HepG2 (cell line): ENCODE measurements at regions of chr2 and their contacts with region 1.

Region 1: DNA sequence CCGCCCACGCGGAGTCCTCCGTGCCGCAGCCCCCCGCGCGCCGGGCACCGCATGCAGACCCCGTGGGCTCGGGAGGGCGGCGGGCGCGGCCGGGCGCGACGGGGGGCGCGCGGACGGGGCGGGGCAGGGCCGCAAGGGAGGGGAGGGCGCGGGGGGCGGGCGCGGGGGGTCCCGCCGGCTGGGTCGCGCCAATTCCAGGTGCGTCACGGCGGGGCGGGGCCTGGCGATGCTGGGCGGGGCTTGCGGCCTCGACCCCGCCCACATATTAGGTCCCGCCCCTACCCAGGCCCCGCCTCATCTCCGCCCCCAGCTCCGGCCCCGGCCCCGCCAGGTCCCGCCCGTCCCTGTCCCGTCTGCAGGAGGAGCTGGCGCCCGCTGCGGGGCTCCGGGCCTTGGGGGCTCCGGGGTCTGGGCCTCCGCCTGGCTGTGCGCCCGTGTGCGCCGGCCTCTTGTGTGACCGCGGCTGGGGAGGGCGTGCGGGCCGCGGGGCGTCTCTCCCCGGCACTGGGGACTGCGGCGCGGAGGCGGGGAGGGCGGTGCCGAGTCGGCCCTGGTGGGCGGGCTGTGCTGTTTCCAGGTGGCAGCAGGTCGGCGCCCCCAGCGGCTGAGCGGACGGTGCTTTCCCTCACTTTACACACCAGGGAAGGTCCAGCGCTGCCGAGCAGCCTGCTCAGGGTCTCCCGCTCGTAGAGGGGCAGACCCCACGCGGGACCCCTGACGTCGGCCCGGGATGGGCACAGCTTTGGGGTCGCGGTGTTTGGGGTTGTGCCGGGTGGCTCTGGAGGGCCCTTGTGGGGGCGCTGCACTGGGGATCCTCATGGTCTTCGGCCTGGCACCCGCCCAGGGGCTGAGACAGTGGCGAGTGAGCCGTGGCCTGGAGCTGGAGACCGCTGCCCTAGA is 543 bp downstream of the ING5 start:
- DNase-seq: peak; percentile 85
- ATAC-seq: peak; percentile 86
- H3K4me3 ChIP-seq: peak overlapping the region; percentile 81 to 99 (median 94)
- H3K27ac ChIP-seq: peak overlapping the region; percentile 98
- H3K4me1 ChIP-seq: peaks cover 28% of the 10 kb centered on the region
- H3K27me3 ChIP-seq: no peaks in the 10 kb centered on the region
- CTCF ChIP-seq: peak; percentile 86
- EP300 ChIP-seq: no peak
- POLR2A ChIP-seq: peak; percentile 38 to 45; a peak in 2 of 4 replicates
- RAD21 ChIP-seq: peak; percentile 81

Region 2: GRCh38 chr2:241391892-241392665 is 310.3 kb before region 1 on chr2:
- CTCF ChIA-PET with region 1: no interaction called
- POLR2A ChIA-PET with region 1: no interaction called
- in situ Hi-C with region 1: no loop called
- intact Hi-C with region 1: no loop called
- DNase-seq: peak; percentile 73
- ATAC-seq: peak; percentile 99
- H3K4me3 ChIP-seq: no peak overlapping the region
- H3K27ac ChIP-seq: no peak overlapping the region
- H3K4me1 ChIP-seq: no peaks in the 10 kb centered on the region
- H3K27me3 ChIP-seq: no peaks in the 10 kb centered on the region
- CTCF ChIP-seq: peak; percentile 69
- EP300 ChIP-seq: no peak
- POLR2A ChIP-seq: no peak
- RAD21 ChIP-seq: peak; percentile 64

Region 3: DNA sequence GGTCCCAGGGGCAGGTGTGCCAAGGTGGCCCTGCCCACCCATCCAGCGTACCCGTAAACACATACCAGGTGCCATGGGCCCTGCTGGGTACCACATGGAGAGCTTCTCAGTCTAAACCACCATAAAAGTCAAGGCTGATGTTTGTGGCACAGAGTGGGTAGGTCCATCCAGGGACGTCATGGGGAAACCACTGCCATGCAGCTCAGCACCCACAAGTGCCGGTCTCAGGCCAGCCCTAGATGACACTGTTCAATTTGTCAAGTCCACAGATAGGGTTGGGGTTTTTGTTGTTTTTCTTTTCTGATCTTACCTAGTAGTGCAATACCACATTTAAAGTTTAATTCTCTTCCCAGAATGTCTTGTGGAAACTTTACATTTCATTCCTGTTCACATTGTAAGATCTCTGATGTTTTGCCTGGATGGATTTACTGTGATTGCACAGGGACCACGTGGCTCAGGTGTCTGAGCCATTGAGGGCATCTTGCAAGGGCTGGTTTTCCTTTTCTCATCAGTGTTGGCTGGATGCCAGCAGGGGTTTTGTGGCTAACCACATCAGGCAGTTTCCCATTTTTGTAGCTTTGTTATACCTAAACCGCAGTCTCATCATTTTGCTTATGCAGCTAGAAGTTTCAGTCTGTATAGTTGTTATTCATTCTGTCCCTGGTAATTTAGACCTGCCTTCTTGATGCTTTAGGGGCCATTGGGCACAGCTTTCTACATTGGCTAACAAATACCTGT is 258.7 kb before region 1 on chr2:
- CTCF ChIA-PET with region 1: no interaction called
- POLR2A ChIA-PET with region 1: no interaction called
- in situ Hi-C with region 1: no loop called
- intact Hi-C with region 1: no loop called
- DNase-seq: no peak
- ATAC-seq: no peak
- H3K4me3 ChIP-seq: no peak overlapping the region
- H3K27ac ChIP-seq: no peak overlapping the region
- H3K4me1 ChIP-seq: no peaks in the 10 kb centered on the region
- H3K27me3 ChIP-seq: no peaks in the 10 kb centered on the region
- CTCF ChIP-seq: no peak
- EP300 ChIP-seq: no peak
- POLR2A ChIP-seq: no peak
- RAD21 ChIP-seq: no peak

Region 4: GRCh38 chr2:241724259-241724974 is 22.0 kb after region 1 on chr2:
- CTCF ChIA-PET with region 1: no interaction called
- POLR2A ChIA-PET with region 1: interaction called, 11 read pairs
- in situ Hi-C with region 1: no loop called
- intact Hi-C with region 1: no loop called
- DNase-seq: no peak
- ATAC-seq: peak; percentile 61
- H3K4me3 ChIP-seq: no peak overlapping the region
- H3K27ac ChIP-seq: no peak overlapping the region
- H3K4me1 ChIP-seq: no peaks in the 10 kb centered on the region
- H3K27me3 ChIP-seq: no peaks in the 10 kb centered on the region
- CTCF ChIP-seq: peak; percentile 89
- EP300 ChIP-seq: no peak
- POLR2A ChIP-seq: no peak
- RAD21 ChIP-seq: peak; percentile 74

Region 5: GRCh38 chr2:241734467-241735208 is 32.3 kb after region 1 on chr2 and contains the start of gene D2HGDH:
- CTCF ChIA-PET with region 1: no interaction called
- POLR2A ChIA-PET with region 1: interaction called, 77 read pairs
- in situ Hi-C with region 1: no loop called
- intact Hi-C with region 1: no loop called
- DNase-seq: peak; percentile 80
- ATAC-seq: peak; percentile 81
- H3K4me3 ChIP-seq: peak within 1 kb of the TSS; percentile 80 to 100 (median 96)
- H3K27ac ChIP-seq: peak within 1 kb of the TSS; percentile 91
- H3K4me1 ChIP-seq: peaks cover 28% of the 10 kb centered on the region
- H3K27me3 ChIP-seq: no peaks in the 10 kb centered on the region; a peak in 2 of 5 replicates
- CTCF ChIP-seq: no peak
- EP300 ChIP-seq: peak in 1 of 2 experiments; percentile 4; a peak in 1 of 4 replicates
- POLR2A ChIP-seq: peak in 1 of 2 experiments; percentile 75; a peak in 1 of 4 replicates
- RAD21 ChIP-seq: peak; percentile 64
- total RNA-seq, gene D2HGDH: 10.2 and 20.3 TPM in 2 replicates

Region 6: DNA sequence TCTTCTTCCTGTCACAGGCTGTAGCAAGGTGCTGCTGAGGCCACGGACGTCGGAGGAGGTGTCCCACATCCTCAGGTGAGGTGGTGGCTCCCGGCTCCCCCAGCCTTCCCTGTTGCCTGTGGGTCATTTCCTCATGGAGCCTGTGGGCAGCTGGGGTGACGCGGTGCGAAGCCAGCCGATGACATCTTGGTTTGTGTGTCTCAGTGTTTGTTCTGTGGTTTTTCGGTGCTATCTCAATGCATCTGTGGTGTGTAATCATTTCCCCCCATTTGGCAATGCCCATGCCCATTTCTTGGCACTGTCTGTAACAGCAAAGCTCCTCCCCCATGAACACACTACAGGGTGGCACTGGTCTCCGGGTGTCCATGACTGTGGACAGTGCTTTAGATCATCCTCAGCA is 38.6 kb after region 1 on chr2:
- CTCF ChIA-PET with region 1: no interaction called
- POLR2A ChIA-PET with region 1: interaction called, 77 read pairs
- in situ Hi-C with region 1: no loop called
- intact Hi-C with region 1: no loop called
- DNase-seq: no peak
- ATAC-seq: no peak
- H3K4me3 ChIP-seq: no peak overlapping the region
- H3K27ac ChIP-seq: no peak overlapping the region
- H3K4me1 ChIP-seq: peaks cover 38% of the 10 kb centered on the region
- H3K27me3 ChIP-seq: no peaks in the 10 kb centered on the region; a peak in 1 of 5 replicates
- CTCF ChIP-seq: no peak
- EP300 ChIP-seq: no peak
- POLR2A ChIP-seq: no peak
- RAD21 ChIP-seq: no peak

Region 7: DNA sequence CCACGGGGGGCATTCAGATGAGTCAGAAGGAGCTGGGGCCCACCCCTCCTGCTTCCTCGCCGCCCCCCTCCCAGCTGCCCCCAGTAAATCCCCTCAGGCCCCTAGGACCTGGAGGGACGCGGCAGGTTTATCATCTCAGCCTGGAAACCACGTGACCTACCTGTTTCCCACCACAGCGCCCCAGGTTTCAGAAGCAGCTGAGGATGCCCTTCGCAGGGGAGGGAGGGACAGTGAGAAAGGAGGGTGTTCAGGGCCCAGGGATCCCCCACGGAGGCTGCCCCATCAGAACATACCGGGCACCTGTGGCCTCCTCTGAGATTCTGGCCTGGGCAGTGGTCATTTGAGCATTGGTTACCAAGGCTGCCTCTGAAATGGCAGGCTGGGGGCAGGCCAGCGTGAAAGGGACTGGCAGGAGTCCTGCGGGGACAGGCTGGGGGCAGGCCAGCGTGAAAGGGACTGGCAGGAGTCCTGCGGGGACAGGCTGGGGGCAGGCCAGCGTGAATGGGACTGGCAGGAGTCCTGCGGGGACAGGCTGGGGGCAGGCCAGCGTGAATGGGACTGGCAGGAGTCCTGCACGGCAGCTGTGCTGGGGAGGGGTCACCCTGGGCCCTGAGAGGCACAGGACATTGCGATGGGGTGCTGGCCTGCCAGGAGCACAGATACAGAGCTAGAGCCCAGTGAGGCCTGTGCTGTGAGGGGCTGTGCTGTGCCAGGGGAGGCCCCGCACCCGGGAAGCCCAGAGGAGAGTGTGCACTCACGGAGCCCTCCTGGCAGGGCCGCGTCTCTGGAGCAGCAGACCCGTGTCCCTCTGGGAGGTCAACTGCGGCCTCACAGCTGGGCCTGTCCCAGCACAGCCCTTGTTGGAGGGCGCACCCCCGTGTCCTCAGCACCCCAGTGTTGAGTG is 108.2 kb after region 1 on chr2:
- CTCF ChIA-PET with region 1: no interaction called
- POLR2A ChIA-PET with region 1: interaction called, 20 read pairs
- in situ Hi-C with region 1: no loop called
- intact Hi-C with region 1: no loop called
- DNase-seq: no peak
- ATAC-seq: no peak
- H3K4me3 ChIP-seq: peak overlapping the region; percentile 73 to 85 (median 81)
- H3K27ac ChIP-seq: peak overlapping the region; percentile 84
- H3K4me1 ChIP-seq: peaks cover 36% of the 10 kb centered on the region
- H3K27me3 ChIP-seq: no peaks in the 10 kb centered on the region; a peak in 1 of 5 replicates
- CTCF ChIP-seq: no peak
- EP300 ChIP-seq: no peak
- POLR2A ChIP-seq: no peak
- RAD21 ChIP-seq: no peak